MCF 10A (cell line): ENCODE measurements at regions of chr17 and their contacts with region 1.

Region 1: GRCh38 chr17:54983260-54983659 is 14.7 kb downstream of the STXBP4 start:
- DNase-seq: no peak
- H3K4me3 Mint-ChIP-seq: no peak overlapping the region
- H3K27ac Mint-ChIP-seq: no peak overlapping the region
- H3K4me1 Mint-ChIP-seq: peaks cover 19% of the 10 kb centered on the region
- H3K27me3 Mint-ChIP-seq: no peaks in the 10 kb centered on the region
- CTCF ChIP-seq: no peak

Region 2: DNA sequence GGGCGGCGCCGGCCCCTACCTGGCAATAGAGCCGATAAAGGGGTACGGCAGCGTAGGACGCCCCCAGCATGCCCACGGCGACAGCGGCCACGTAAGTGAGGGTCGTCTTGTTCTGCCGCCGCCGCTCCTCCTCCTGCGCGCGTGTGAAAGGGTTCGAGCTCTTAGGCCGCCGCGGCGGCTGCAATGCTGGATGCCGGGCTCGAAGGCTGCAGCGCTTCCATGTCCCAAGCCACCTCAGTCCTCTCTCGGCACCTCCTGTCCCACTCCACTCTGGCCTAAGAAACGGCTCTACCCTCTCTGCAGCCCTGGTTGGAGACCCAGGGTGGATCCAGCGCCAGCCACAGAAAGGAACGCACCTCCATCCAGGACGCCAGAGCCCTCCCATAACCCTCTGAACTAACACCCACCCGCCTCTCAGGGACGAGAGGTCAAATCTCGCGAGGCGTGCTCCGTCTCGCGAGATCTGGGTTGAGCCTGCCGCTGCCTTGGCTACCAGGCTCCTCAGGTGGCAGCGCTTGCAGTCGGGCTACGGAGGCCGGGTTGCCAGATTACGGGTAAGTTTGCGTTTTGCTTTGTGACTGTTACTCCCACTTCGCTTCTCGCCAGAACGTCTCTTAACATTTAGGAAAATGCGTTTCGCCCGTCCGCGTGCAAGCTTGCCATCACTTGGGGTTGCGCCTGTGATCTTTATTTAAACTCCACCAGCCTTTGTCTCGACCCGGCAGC is 14.8 kb before region 1 on chr17 and contains the starts of genes COX11 and STXBP4:
- CTCF ChIA-PET with region 1: no interaction called
- POLR2A ChIA-PET with region 1: interaction called, 11 read pairs
- intact Hi-C with region 1: no loop called
- DNase-seq: peak; percentile 97
- H3K4me3 Mint-ChIP-seq: no peak within 1 kb of the TSS
- H3K27ac Mint-ChIP-seq: no peak within 1 kb of the TSS
- H3K4me1 Mint-ChIP-seq: peaks cover 8% of the 10 kb centered on the region
- H3K27me3 Mint-ChIP-seq: no peaks in the 10 kb centered on the region
- CTCF ChIP-seq: peak; percentile 26
- total RNA-seq, gene COX11: 29.6 and 38.5 TPM in 2 replicates
- total RNA-seq, gene STXBP4: 6.7 and 10.2 TPM in 2 replicates

Region 3: GRCh38 chr17:55549140-55549539 is 565.9 kb after region 1 on chr17:
- CTCF ChIA-PET with region 1: no interaction called
- POLR2A ChIA-PET with region 1: no interaction called
- intact Hi-C with region 1: no loop called
- DNase-seq: peak; percentile 47
- H3K4me3 Mint-ChIP-seq: no peak overlapping the region
- H3K27ac Mint-ChIP-seq: no peak overlapping the region
- H3K4me1 Mint-ChIP-seq: peaks cover 16% of the 10 kb centered on the region
- H3K27me3 Mint-ChIP-seq: no peaks in the 10 kb centered on the region
- CTCF ChIP-seq: no peak